Head of caudate nucleus (tissue), 42 donors: ENCODE measurements at regions of chr13 and their contacts with region 1.

Region 1: GRCh38 chr13:63983366-63983765 is 2567.7 kb upstream of the PCDH20 start:
- DNase-seq: no peak

Region 2: DNA sequence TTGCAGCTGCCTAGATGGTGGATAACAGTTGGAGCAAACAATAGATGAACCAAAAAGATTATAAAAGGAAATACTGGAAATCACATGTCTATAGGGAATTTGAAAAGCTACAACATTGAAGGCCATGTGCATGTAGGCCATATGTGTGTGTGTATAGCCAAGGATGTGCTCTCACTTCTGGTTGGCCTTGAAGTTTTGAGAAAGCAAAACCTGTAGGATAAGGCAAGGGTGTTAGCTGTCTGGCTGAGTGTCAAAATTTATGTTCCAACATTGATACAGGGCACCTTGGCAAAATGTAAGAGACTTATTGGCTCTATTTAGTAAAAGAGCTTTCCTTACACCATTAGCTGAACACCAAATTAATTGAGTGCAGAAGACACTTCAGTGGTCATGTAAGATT is 844.1 kb before region 1 on chr13:
- intact Hi-C with region 1: loop called (anchors 10 kb)
- DNase-seq: no peak

Region 3: GRCh38 chr13:64206430-64207225 is 223.3 kb after region 1 on chr13:
- intact Hi-C with region 1: no loop called
- DNase-seq: peak in 1 of 42 donors; percentile 24